Activated CD4-positive, alpha-beta T cell treated with anti-CD3 and anti-CD28 coated beads, Interleukin-2, amount 10 ng/mL, durations not matched to agents 24 days and 14 days (primary cell): ENCODE measurements at regions of chr21 and their contacts with region 1.

Region 1: GRCh38 chr21:37009740-37010341 is 3.3 kb downstream of the RIPPLY3 start:
- DNase-seq: peak; percentile 94
- H3K4me3 Mint-ChIP-seq: peak overlapping the region; percentile 74
- H3K27ac Mint-ChIP-seq: no peak overlapping the region
- H3K4me1 Mint-ChIP-seq: peaks cover 6% of the 10 kb centered on the region
- H3K27me3 Mint-ChIP-seq: peaks cover 34% of the 10 kb centered on the region

Region 2: DNA sequence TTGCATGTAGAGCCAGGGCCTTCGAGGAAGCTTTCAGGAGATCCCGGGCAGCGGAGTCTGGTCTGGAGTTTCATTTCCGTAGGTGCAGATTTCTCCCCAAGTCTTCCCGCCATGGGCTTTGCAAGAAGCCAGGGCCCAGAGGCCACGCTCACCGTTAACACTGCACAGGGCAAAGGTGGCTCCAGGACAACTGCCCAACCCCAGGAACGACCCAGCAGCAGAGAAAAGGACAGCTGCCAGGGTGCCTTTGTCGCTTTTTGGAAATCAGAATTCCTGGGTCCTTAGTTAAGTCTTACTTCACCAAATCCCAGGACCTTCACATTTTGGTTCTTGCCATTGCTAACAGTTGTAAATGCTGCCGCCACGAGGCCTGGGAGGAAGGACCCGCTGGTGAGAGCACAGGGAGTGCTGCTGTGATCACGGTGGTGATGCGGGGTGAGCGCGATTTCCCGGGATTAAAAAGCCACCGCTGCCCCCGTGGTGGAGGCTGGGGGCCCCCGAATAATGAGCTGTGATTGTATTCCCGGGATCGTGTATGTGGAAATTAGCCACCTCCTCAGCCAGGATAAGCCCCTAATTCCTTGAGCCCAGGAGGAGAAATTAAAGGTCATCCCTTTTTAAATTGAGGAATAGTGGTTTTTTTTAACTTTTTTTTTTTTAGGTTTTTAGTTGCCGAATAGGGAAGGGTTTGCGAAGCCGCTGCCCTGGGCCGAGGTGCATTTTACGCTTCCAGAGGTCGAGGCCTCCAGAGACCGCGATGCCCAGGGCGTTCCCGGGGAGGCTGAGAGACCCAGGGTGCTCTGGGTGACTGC is 302.7 kb before region 1 on chr21:
- intact Hi-C with region 1: loop called (anchors 5 kb)
- DNase-seq: no peak
- H3K4me3 Mint-ChIP-seq: no peak overlapping the region
- H3K27ac Mint-ChIP-seq: peak overlapping the region; percentile 29
- H3K4me1 Mint-ChIP-seq: peaks cover 3% of the 10 kb centered on the region
- H3K27me3 Mint-ChIP-seq: peaks cover 78% of the 10 kb centered on the region

Region 3: DNA sequence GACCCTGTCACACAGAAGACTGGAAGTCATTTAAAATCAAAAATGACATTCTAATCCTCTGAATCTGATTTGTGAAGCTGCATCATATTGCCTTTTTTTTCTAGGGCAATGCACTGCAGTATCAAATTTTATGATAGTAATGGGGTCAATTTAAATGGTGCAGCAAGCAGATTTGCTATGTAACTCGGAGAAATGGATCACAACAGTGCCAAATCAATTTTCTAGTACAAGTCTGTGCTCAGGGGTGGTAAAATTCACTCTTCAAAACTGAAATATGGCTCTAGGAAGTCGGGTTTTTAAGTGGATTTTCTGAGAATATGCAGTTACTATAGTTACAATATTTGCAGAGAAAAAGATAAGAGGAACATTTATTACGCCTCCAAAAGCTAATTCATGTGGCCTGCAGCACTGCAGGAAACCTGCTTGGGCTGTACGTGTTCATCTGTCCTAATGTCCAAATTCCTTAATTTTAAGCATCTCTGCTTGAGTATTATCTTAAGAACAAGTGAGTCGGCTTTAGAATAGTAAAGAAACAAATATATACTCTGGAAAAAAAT is 74.9 kb before region 1 on chr21:
- intact Hi-C with region 1: loop called (anchors 1 kb)
- DNase-seq: no peak
- H3K4me3 Mint-ChIP-seq: no peak overlapping the region
- H3K27ac Mint-ChIP-seq: no peak overlapping the region
- H3K4me1 Mint-ChIP-seq: no peaks in the 10 kb centered on the region
- H3K27me3 Mint-ChIP-seq: no peaks in the 10 kb centered on the region

Region 4: DNA sequence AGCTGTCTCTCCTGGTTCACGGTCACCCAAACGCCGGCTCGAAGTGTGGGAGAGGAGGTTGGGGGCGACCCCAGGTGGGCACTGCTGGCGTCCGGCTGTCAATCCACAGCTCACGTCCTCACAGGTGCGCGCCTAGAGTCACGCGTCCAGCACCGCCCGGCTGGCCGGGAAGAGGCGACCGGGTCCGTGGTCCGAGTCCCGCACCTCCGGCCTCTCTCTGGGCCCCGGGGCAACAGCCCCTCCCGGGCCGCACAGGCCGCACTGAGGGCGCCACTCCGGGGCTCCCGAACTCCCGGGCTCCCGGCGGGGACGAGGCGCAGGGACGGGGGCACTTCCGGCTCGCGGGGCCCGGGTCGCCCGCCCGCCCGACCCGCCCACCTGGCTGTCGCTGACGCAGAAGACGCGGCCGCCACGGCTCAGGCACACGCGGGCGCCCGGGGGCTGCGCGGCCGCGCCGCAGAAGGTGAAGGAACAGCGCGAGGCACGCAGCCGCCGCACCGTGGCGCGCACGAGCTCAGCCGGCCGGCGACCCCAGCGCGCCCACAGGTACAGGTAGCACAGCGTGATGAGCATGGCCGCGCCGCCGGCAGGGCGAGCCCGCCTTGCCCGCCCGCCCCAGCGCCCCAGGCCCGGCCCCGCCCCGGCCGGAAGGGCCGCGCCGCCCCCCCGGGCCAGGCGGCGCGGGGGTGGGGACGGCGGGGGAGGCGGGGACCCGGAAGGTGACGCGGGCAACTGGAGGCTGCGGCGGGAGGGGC is 43.6 kb before region 1 on chr21 and contains the start of gene HLCS:
- intact Hi-C with region 1: loop called (anchors 5 kb)
- DNase-seq: peak; percentile 92
- H3K4me3 Mint-ChIP-seq: peak within 1 kb of the TSS; percentile 86
- H3K27ac Mint-ChIP-seq: peak within 1 kb of the TSS; percentile 91
- H3K4me1 Mint-ChIP-seq: peaks cover 14% of the 10 kb centered on the region
- H3K27me3 Mint-ChIP-seq: no peaks in the 10 kb centered on the region
- total RNA-seq, gene HLCS: 15.3 and 16.5 TPM in 2 replicates

Region 5: GRCh38 chr21:36976882-36977651 is 32.8 kb before region 1 on chr21:
- intact Hi-C with region 1: loop called (anchors 1 kb)
- DNase-seq: peak; percentile 75
- H3K4me3 Mint-ChIP-seq: no peak overlapping the region
- H3K27ac Mint-ChIP-seq: peak overlapping the region; percentile 49
- H3K4me1 Mint-ChIP-seq: peaks cover 26% of the 10 kb centered on the region
- H3K27me3 Mint-ChIP-seq: peaks cover 6% of the 10 kb centered on the region